T-cell (primary cell): ENCODE measurements at regions of chr12 and their contacts with region 1.

Region 1: DNA sequence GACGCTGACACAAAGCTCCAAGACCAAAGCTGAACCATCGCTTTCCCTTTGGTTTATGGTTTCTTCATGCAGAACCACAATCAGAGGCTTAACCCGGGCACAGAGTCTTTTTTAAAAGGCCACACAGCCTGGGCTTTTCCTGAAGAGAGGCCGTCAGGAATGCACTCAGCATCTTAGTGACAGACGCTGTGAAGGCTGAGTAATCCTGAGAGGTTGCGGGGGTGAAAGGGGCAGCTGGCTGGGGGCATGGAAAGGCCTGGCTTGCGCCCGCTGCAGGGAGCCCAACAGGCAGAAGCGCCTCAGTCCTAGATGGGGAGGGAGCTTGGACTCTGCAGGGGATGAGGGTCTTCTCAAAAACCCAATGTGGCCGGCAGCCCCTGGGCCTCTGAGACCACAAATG is 13.6 kb downstream of the CTDSP2 start:
- DNase-seq: no peak
- ATAC-seq: no peak
- H3K4me3 ChIP-seq: no peak overlapping the region
- H3K4me3 Mint-ChIP-seq: peak overlapping the region in 1 of 3 donors; percentile 82
- H3K27ac ChIP-seq: peak overlapping the region; percentile 84
- H3K27ac Mint-ChIP-seq: peak overlapping the region; percentile 23 to 92
- H3K4me1 ChIP-seq: peaks cover 42 to 82% of the 10 kb centered on the region in 2 experiments
- H3K4me1 Mint-ChIP-seq: peaks cover 79 to 88% (median 87%) of the 10 kb centered on the region in 3 donors
- H3K27me3 ChIP-seq: no peaks in the 10 kb centered on the region
- H3K27me3 Mint-ChIP-seq: no peaks in the 10 kb centered on the region

Region 2: GRCh38 chr12:57631893-57632693 is 200.9 kb before region 1 on chr12:
- CTCF ChIA-PET with region 1: no interaction called
- POLR2A ChIA-PET with region 1: no interaction called
- DNase-seq: peak in 6 of 35 experiments; percentile 18 to 55 (median 26)
- ATAC-seq: peak in 3 of 4 experiments; percentile 22 to 44 (median 23)
- H3K4me3 ChIP-seq: peak overlapping the region; percentile 51 to 53
- H3K4me3 Mint-ChIP-seq: peak overlapping the region; percentile 47 to 73 (median 56)
- H3K27ac ChIP-seq: no peak overlapping the region
- H3K27ac Mint-ChIP-seq: peak overlapping the region in 1 of 2 donors; percentile 19
- H3K4me1 ChIP-seq: peaks cover 0 to 28% of the 10 kb centered on the region in 2 experiments
- H3K4me1 Mint-ChIP-seq: peaks cover 2 to 17% (median 13%) of the 10 kb centered on the region in 3 donors
- H3K27me3 ChIP-seq: peaks cover 10 to 76% of the 10 kb centered on the region in 2 experiments
- H3K27me3 Mint-ChIP-seq: peaks cover 32 to 57% of the 10 kb centered on the region in 2 donors

Region 3: DNA sequence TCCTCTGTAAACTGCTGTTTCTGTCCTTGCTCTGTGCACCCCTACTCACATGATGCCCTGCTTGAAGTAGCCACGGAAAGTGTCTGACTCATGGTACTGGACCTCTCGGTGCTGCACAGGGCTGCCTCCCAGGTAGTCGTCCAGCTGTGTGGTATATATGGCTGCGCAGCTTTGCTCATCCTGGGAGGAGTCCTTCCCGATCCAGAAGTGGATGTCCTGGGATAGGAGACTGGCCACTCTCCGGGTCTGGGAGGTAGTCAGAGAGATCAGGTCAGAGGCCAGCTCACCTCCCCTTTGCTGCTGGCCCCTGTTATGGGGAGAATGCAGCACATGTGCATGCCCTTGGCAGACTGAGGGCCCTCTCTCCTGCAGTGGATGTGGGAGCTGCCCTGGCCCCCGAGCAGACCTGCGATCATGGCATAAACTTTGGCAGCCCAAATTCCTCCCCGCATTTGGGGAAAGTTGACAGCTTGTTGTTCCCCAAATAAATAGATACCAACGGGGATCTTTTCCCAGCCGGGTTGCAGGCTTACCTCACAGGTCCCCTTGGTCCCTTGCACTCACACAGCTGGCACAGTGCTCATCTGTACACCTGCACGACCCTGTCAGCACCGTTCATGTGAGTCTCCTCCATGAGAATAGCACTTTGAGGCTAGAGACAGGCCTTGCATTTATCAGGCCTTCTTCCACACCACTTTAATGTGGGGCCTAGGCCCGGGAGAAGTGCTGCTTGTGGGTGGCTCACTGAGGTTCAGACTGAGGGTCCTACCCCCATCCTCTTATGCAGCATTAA is 19.6 kb before region 1 on chr12:
- CTCF ChIA-PET with region 1: no interaction called
- POLR2A ChIA-PET with region 1: interaction called, 3 to 13 read pairs
- DNase-seq: no peak
- ATAC-seq: no peak
- H3K4me3 ChIP-seq: no peak overlapping the region
- H3K4me3 Mint-ChIP-seq: no peak overlapping the region
- H3K27ac ChIP-seq: no peak overlapping the region
- H3K27ac Mint-ChIP-seq: no peak overlapping the region
- H3K4me1 ChIP-seq: no peaks in the 10 kb centered on the region
- H3K4me1 Mint-ChIP-seq: peaks cover 0 to 6% (median 5%) of the 10 kb centered on the region in 3 donors
- H3K27me3 ChIP-seq: no peaks in the 10 kb centered on the region
- H3K27me3 Mint-ChIP-seq: no peaks in the 10 kb centered on the region

Region 4: DNA sequence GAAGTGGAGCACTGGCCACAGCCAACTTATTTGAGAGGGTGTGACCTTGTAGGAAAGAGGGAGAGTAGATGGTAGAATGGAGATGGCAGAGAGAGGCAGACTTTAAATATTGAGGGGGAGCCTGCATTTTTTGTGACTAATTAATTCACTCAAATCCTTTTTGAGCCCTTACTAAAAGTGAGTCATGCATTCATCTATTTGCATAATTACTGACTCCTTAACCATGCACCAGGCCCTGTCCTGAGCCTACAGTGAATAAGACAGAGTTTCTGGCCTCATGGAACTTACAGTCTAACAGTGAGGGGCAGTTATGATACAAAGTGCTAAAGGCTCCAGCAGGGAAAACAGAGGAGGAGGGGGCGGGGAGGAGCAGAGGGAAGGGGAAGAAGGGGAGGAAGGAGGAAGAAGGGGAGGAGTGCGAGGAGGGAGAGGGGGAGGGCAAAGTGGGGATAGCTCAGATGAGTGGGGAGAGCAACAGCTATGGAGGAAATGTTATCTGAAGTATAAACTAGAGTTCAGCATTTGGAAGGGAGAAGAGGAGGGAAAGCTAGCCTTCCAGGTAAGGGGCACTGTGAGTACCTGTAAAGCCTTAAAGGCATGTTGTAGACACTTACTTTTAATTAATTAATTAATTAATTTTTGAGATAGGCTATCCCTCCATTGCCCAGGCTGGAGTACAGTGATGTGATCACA is 21.0 kb after region 1 on chr12:
- CTCF ChIA-PET with region 1: no interaction called
- POLR2A ChIA-PET with region 1: interaction called in 1 of 2 experiments, 10 read pairs
- DNase-seq: no peak
- ATAC-seq: no peak
- H3K4me3 ChIP-seq: no peak overlapping the region
- H3K4me3 Mint-ChIP-seq: no peak overlapping the region
- H3K27ac ChIP-seq: no peak overlapping the region
- H3K27ac Mint-ChIP-seq: no peak overlapping the region
- H3K4me1 ChIP-seq: peaks cover 11 to 16% of the 10 kb centered on the region in 2 experiments
- H3K4me1 Mint-ChIP-seq: peaks cover 13 to 27% (median 13%) of the 10 kb centered on the region in 3 donors
- H3K27me3 ChIP-seq: peaks cover 2 to 37% of the 10 kb centered on the region in 2 experiments
- H3K27me3 Mint-ChIP-seq: peaks cover 22 to 24% of the 10 kb centered on the region in 2 donors

Region 5: DNA sequence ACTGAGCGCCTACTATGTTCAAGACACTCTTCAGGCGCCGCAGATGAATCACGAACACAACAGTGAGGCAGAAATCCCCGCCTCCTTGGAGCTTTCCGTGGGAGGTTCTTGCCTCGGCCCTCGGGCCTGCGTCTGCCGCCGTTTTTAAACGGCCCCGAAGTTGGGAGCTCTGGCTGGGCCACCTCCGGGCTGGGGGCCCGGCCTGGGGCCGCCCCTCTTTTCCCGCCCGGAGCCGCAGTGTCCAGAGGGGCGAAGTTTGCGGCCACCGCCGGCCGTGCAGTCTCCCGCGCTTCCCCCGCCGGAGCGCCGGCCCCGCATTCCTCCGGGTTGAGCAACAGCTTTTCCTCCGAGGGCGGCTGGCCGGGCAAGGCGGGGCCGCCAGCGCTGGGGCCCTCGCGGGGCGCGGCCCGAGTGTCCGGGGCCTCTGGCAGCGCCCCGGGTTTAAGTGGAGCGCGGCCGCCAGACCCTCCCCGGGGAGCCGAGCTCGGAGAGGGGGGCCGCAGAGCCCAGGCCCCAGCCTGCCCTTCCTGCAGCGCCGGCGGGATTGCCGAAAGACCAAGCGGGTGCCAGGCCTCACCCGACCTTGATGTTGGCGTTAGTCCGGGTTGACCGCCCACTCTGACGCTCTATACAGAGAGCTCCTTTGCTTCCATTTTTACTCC is 32.3 kb after region 1 on chr12:
- CTCF ChIA-PET with region 1: interaction called in 1 of 2 experiments, 18 read pairs
- POLR2A ChIA-PET with region 1: interaction called, 3 to 5 read pairs
- DNase-seq: peak in 22 of 35 experiments; percentile 12 to 65 (median 30)
- ATAC-seq: peak; percentile 82 to 90 (median 86)
- H3K4me3 ChIP-seq: peak overlapping the region; percentile 44 to 68
- H3K4me3 Mint-ChIP-seq: peak overlapping the region; percentile 68 to 91 (median 81)
- H3K27ac ChIP-seq: no peak overlapping the region
- H3K27ac Mint-ChIP-seq: no peak overlapping the region
- H3K4me1 ChIP-seq: peaks cover 3 to 8% of the 10 kb centered on the region in 2 experiments
- H3K4me1 Mint-ChIP-seq: peaks cover 5 to 8% (median 8%) of the 10 kb centered on the region in 3 donors
- H3K27me3 ChIP-seq: peaks cover 0 to 46% of the 10 kb centered on the region in 2 experiments
- H3K27me3 Mint-ChIP-seq: peaks cover 6 to 14% of the 10 kb centered on the region in 2 donors

Region 6: GRCh38 chr12:57899010-57899662 is 66.2 kb after region 1 on chr12:
- CTCF ChIA-PET with region 1: interaction called, 12 to 16 read pairs
- POLR2A ChIA-PET with region 1: interaction called in 1 of 2 experiments, 5 read pairs
- DNase-seq: peak; percentile 49 to 90 (median 83)
- ATAC-seq: peak; percentile 86 to 89 (median 88)
- H3K4me3 ChIP-seq: no peak overlapping the region
- H3K4me3 Mint-ChIP-seq: peak overlapping the region; percentile 49 to 82 (median 70)
- H3K27ac ChIP-seq: peak overlapping the region; percentile 94
- H3K27ac Mint-ChIP-seq: peak overlapping the region; percentile 99
- H3K4me1 ChIP-seq: peaks cover 30 to 57% of the 10 kb centered on the region in 2 experiments
- H3K4me1 Mint-ChIP-seq: peaks cover 56 to 61% (median 56%) of the 10 kb centered on the region in 3 donors
- H3K27me3 ChIP-seq: no peaks in the 10 kb centered on the region
- H3K27me3 Mint-ChIP-seq: no peaks in the 10 kb centered on the region

Region 7: GRCh38 chr12:57904848-57905811 is 72.2 kb after region 1 on chr12:
- CTCF ChIA-PET with region 1: interaction called, 10 to 16 read pairs
- POLR2A ChIA-PET with region 1: no interaction called
- DNase-seq: peak; percentile 53 to 92 (median 78)
- ATAC-seq: peak; percentile 97 to 100 (median 98)
- H3K4me3 ChIP-seq: no peak overlapping the region
- H3K4me3 Mint-ChIP-seq: peak overlapping the region; percentile 0 to 48 (median 29)
- H3K27ac ChIP-seq: no peak overlapping the region
- H3K27ac Mint-ChIP-seq: peak overlapping the region; percentile 2 to 61
- H3K4me1 ChIP-seq: peaks cover 2 to 10% of the 10 kb centered on the region in 2 experiments
- H3K4me1 Mint-ChIP-seq: peaks cover 8 to 11% (median 11%) of the 10 kb centered on the region in 3 donors
- H3K27me3 ChIP-seq: peaks cover 0 to 11% of the 10 kb centered on the region in 2 experiments
- H3K27me3 Mint-ChIP-seq: peaks cover 14 to 17% of the 10 kb centered on the region in 2 donors